ENCODE measurements at regions of chr4 and their contacts with region 1.

Region 1: GRCh38 chr4:75702919-75703411 is 21.4 kb upstream of the USO1 start:
- DNase-seq: peak; percentile 52 to 57
- H3K4me3 ChIP-seq: no peak overlapping the region
- H3K4me3 Mint-ChIP-seq: peak overlapping the region; percentile 62
- H3K27ac Mint-ChIP-seq: peak overlapping the region; percentile 57
- H3K4me1 ChIP-seq: peaks cover 21% of the 10 kb centered on the region
- H3K4me1 Mint-ChIP-seq: peaks cover 19% of the 10 kb centered on the region
- H3K27me3 ChIP-seq: no peaks in the 10 kb centered on the region
- H3K27me3 Mint-ChIP-seq: no peaks in the 10 kb centered on the region
- CTCF ChIP-seq: no peak

Region 2: DNA sequence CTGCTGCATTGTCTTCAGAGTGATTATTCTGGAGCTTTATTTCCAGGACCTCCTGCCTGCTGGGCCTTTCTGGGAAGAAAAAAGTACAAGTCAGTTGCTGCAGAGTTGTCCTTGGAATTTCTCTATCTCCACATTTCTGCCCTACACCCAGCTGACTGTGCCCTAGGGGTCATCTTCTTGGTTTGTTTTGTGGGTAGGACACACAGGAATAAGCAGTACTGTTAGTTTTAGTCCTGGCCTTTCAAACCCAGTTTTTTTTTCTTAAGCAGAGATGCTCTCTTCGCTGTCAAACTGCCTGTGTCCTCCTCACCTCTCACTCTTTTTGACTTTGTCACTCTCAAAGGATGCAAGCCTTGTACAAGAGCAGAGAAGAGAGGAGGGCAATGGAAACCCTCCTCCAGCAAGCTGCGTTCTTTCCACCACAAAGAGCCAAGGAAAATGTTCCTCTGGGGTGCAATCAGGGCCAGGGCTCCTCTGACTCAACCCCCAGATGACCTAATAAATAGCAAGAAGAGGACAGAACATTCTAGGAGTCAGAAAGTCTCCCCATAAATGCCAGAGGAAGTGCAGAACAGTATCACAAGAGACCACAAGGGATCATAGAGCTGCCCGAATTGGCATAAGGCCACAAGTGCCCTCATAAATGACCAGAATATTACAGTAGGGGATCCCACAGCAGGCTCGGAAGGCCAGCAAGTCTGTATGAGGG is 375.0 kb before region 1 on chr4:
- CTCF ChIA-PET with region 1: no interaction called
- POLR2A ChIA-PET with region 1: no interaction called
- intact Hi-C with region 1: no loop called
- DNase-seq: no peak
- H3K4me3 ChIP-seq: no peak overlapping the region
- H3K4me3 Mint-ChIP-seq: no peak overlapping the region
- H3K27ac Mint-ChIP-seq: no peak overlapping the region
- H3K4me1 ChIP-seq: no peaks in the 10 kb centered on the region
- H3K4me1 Mint-ChIP-seq: no peaks in the 10 kb centered on the region
- H3K27me3 ChIP-seq: no peaks in the 10 kb centered on the region
- H3K27me3 Mint-ChIP-seq: peaks cover 4% of the 10 kb centered on the region
- CTCF ChIP-seq: no peak

Region 3: DNA sequence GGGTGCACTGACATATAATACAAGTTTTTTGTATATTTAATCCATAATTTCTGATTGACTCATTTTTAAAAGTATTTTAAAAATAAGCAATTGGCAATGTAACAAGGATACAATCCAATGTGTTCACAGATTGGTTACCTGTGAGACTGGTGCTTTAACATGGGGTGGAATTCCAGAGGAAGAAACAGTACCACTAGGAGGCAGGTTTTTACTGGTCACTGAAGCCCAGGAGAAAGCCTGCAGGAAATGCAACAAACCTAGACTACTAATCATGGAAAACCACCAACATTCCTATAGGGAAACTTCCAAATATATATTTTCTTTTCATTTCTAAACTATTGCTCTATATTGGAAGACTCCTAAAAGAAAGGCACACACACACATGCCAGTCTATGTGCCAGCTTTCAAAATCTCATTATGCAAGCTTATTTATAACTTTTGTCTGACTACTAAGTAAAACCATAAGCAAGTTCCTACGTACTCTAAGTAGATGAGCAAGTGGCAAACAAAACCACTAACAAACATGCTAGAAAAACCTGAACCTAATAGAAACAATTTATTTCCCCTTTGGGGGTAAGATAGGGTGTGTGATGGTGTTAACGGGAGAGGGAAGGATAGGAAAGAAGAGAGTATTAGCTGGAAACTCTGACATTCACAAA is 49.0 kb before region 1 on chr4:
- CTCF ChIA-PET with region 1: interaction called, 3 read pairs
- POLR2A ChIA-PET with region 1: no interaction called
- intact Hi-C with region 1: loop called (anchors 1 kb)
- DNase-seq: peak in 1 of 2 experiments; percentile 56
- H3K4me3 ChIP-seq: no peak overlapping the region
- H3K4me3 Mint-ChIP-seq: no peak overlapping the region
- H3K27ac Mint-ChIP-seq: no peak overlapping the region
- H3K4me1 ChIP-seq: peaks cover 37% of the 10 kb centered on the region
- H3K4me1 Mint-ChIP-seq: peaks cover 6% of the 10 kb centered on the region
- H3K27me3 ChIP-seq: no peaks in the 10 kb centered on the region
- H3K27me3 Mint-ChIP-seq: no peaks in the 10 kb centered on the region
- CTCF ChIP-seq: peak; percentile 43 to 67

Region 4: GRCh38 chr4:75831856-75832405 is 129.0 kb after region 1 on chr4:
- CTCF ChIA-PET with region 1: no interaction called
- POLR2A ChIA-PET with region 1: no interaction called
- intact Hi-C with region 1: no loop called
- DNase-seq: no peak
- H3K4me3 ChIP-seq: no peak overlapping the region
- H3K4me3 Mint-ChIP-seq: no peak overlapping the region
- H3K27ac Mint-ChIP-seq: no peak overlapping the region
- H3K4me1 ChIP-seq: peaks cover 7% of the 10 kb centered on the region
- H3K4me1 Mint-ChIP-seq: no peaks in the 10 kb centered on the region
- H3K27me3 ChIP-seq: no peaks in the 10 kb centered on the region
- H3K27me3 Mint-ChIP-seq: no peaks in the 10 kb centered on the region
- CTCF ChIP-seq: no peak